ENCODE measurements at regions of chr10 and their contacts with region 1.

Region 1: DNA sequence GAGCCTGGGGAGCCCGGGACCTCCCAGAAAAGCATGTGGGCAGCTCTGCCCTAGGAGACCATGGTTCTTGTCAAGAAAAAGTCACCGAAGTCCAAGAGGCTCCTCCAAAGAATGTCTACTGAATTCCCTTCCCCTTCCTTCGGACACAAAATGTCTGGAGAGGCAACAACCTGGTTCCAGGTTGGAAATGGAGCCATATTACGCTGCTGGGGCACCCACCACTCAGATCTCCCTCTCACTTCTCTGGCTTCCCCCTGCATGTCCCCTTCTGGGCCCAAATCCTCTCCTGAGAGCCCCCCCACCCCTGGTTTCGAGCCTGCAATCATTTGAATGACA is 52.6 kb downstream of the RGS10 start:
- DNase-seq: no peak
- H3K4me3 ChIP-seq: peak overlapping the region in 1 of 2 donors; percentile 51
- H3K4me3 Mint-ChIP-seq: peak overlapping the region; percentile 18 to 92 (median 88)
- H3K27ac ChIP-seq: peak overlapping the region; percentile 68
- H3K27ac Mint-ChIP-seq: peak overlapping the region; percentile 82 to 97 (median 95)
- H3K4me1 ChIP-seq: peaks cover 45% of the 10 kb centered on the region
- H3K4me1 Mint-ChIP-seq: peaks cover 25 to 50% (median 33%) of the 10 kb centered on the region in 4 donors
- H3K27me3 ChIP-seq: no peaks in the 10 kb centered on the region
- H3K27me3 Mint-ChIP-seq: no peaks in the 10 kb centered on the region

Region 2: GRCh38 chr10:119445311-119445934 is 44.5 kb before region 1 on chr10:
- CTCF ChIA-PET with region 1: interaction called, 48 read pairs
- POLR2A ChIA-PET with region 1: no interaction called
- intact Hi-C with region 1: loop called (anchors 1 kb)
- DNase-seq: peak; percentile 72 to 79 (median 76)
- H3K4me3 ChIP-seq: no peak overlapping the region
- H3K4me3 Mint-ChIP-seq: peak overlapping the region in 1 of 8 donors; percentile 22
- H3K27ac ChIP-seq: no peak overlapping the region
- H3K27ac Mint-ChIP-seq: peak overlapping the region in 3 of 7 donors; percentile 43 to 65 (median 48)
- H3K4me1 ChIP-seq: peaks cover 6% of the 10 kb centered on the region
- H3K4me1 Mint-ChIP-seq: peaks cover 1 to 13% (median 8%) of the 10 kb centered on the region in 4 donors
- H3K27me3 ChIP-seq: no peaks in the 10 kb centered on the region
- H3K27me3 Mint-ChIP-seq: no peaks in the 10 kb centered on the region

Region 3: GRCh38 chr10:119478111-119478802 is 11.7 kb before region 1 on chr10:
- CTCF ChIA-PET with region 1: interaction called, 18 read pairs
- POLR2A ChIA-PET with region 1: interaction called, 16 read pairs
- intact Hi-C with region 1: no loop called
- DNase-seq: peak in 4 of 5 donors; percentile 33 to 45 (median 36)
- H3K4me3 ChIP-seq: peak overlapping the region in 1 of 2 donors; percentile 13
- H3K4me3 Mint-ChIP-seq: peak overlapping the region; percentile 26 to 85 (median 71)
- H3K27ac ChIP-seq: peak overlapping the region; percentile 11
- H3K27ac Mint-ChIP-seq: peak overlapping the region; percentile 64 to 90 (median 88)
- H3K4me1 ChIP-seq: peaks cover 30% of the 10 kb centered on the region
- H3K4me1 Mint-ChIP-seq: peaks cover 24 to 38% (median 30%) of the 10 kb centered on the region in 4 donors
- H3K27me3 ChIP-seq: no peaks in the 10 kb centered on the region
- H3K27me3 Mint-ChIP-seq: no peaks in the 10 kb centered on the region

Region 4: GRCh38 chr10:121069061-121069850 is 1579.3 kb after region 1 on chr10:
- CTCF ChIA-PET with region 1: no interaction called
- POLR2A ChIA-PET with region 1: no interaction called
- intact Hi-C with region 1: no loop called
- DNase-seq: no peak
- H3K4me3 ChIP-seq: no peak overlapping the region
- H3K4me3 Mint-ChIP-seq: no peak overlapping the region
- H3K27ac ChIP-seq: no peak overlapping the region
- H3K27ac Mint-ChIP-seq: no peak overlapping the region
- H3K4me1 ChIP-seq: no peaks in the 10 kb centered on the region
- H3K4me1 Mint-ChIP-seq: no peaks in the 10 kb centered on the region
- H3K27me3 ChIP-seq: no peaks in the 10 kb centered on the region
- H3K27me3 Mint-ChIP-seq: no peaks in the 10 kb centered on the region